H1 (cell line): ENCODE measurements at regions of chr2 and their contacts with region 1.

Region 1: DNA sequence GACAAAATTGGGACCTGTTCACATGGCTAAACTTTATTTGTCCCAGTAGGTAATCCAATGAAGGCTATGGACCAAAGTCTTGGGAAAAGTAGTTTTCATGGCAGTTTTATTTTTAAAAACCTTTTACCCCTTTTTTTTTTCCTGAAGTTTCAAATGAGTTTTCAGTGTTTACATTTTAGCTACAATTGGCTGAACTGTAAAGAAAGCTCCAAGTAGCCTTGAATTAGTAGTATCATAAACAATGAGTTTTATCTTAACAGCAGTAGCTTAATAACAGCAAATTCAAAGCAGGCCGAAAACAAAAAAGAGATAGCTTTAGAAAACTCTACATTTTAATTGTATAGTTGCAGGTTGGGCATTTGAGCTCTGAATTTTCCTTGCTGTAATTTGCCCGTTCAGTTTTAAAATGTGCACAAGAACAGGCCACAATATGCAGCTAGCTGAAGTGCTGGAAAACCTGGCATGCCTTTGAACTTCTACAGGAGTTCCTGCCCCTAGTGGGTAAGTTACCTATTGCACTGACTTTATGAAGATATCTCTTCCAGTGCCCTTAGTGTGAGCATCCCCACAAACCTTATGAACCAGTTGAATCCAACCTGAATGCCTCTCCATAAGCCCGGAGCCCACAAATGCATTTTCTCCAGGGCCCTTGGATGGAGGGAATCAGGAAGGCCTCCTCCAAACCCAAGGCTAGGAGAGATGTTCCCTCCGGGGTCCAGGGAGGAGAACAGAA is 106.7 kb downstream of the XRCC5 start:
- DNase-seq: no peak
- H3K4me3 ChIP-seq: no peak overlapping the region
- H3K27ac ChIP-seq: no peak overlapping the region
- H3K4me1 ChIP-seq: no peaks in the 10 kb centered on the region; a peak in 1 of 7 replicates
- H3K27me3 ChIP-seq: no peaks in the 10 kb centered on the region
- CTCF ChIP-seq: peak in 2 of 3 experiments; percentile 43 to 68; a peak in 2 of 4 replicates
- EP300 ChIP-seq: no peak
- POLR2A ChIP-seq: no peak
- RAD21 ChIP-seq: peak; percentile 42 to 57

Region 2: DNA sequence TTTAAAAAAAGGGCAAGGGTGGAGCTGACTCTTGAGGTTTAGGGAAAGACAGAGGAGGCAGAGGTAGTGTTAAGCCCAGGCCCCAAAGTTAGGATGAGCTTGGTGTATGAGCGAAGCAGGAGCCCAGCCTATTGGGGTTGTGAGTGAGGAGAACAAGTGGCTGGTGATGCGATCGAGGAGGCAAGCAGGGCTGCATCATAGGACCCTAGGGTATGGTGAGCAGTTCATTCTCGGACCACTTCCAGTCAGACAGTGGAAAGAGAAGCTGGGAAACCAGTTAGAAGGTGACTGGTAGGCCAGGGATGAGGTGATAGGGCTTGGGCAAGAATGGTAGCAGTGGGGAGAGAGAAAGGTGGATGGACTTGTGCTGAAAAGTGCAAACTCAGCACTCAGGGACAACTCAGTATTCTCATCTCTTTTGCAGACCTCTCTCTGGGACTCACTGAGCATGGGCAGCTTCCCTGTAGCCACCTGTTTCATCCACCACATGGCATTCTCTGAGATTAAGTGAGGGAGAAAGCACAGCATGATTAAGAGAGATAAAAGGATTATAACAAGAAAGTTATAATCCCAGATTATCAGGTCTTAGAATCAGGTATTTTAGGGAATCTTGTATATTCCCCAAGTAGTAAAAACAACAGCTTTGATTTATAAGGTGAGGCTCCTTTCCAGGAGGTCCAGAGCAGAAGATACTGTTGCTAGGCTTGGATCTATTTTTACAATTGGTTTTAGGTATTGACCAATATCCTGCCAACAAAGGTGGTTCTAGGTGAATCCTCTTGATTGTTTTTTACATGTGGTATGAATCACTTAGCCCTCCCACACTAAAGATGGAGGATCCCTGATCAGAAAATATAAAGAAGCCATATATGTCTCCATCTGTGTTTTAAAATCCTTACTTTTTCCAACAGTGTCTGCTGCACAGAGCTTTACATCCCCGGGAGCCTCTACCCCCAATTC is 68.4 kb before region 1 on chr2:
- CTCF ChIA-PET with region 1: no interaction called
- POLR2A ChIA-PET with region 1: no interaction called
- DNase-seq: no peak
- H3K4me3 ChIP-seq: no peak overlapping the region
- H3K27ac ChIP-seq: no peak overlapping the region
- H3K4me1 ChIP-seq: no peaks in the 10 kb centered on the region
- H3K27me3 ChIP-seq: no peaks in the 10 kb centered on the region
- CTCF ChIP-seq: no peak
- EP300 ChIP-seq: no peak
- POLR2A ChIP-seq: 0 out of 3 replicates have a peak, but pooled peaks of 1 of the 2 experiments have one; percentile 12
- RAD21 ChIP-seq: no peak

Region 3: GRCh38 chr2:216202626-216203250 is 13.1 kb before region 1 on chr2:
- CTCF ChIA-PET with region 1: interaction called, 11 read pairs
- POLR2A ChIA-PET with region 1: interaction called, 8 read pairs
- DNase-seq: no peak
- H3K4me3 ChIP-seq: no peak overlapping the region
- H3K27ac ChIP-seq: no peak overlapping the region
- H3K4me1 ChIP-seq: no peaks in the 10 kb centered on the region
- H3K27me3 ChIP-seq: peaks cover 0 to 2% (median 0%) of the 10 kb centered on the region in 4 experiments; a peak in 1 of 7 replicates
- CTCF ChIP-seq: no peak
- EP300 ChIP-seq: no peak
- POLR2A ChIP-seq: no peak; a peak in 1 of 3 replicates
- RAD21 ChIP-seq: no peak

Region 4: GRCh38 chr2:216296856-216297255 is 81.0 kb after region 1 on chr2:
- CTCF ChIA-PET with region 1: no interaction called
- POLR2A ChIA-PET with region 1: no interaction called
- DNase-seq: no peak
- H3K4me3 ChIP-seq: no peak overlapping the region
- H3K27ac ChIP-seq: no peak overlapping the region
- H3K4me1 ChIP-seq: peaks cover 0 to 16% (median 10%) of the 10 kb centered on the region in 4 experiments; a peak in 6 of 7 replicates
- H3K27me3 ChIP-seq: 0 out of 7 replicates have a peak, but pooled peaks cover 0 to 3% (median 0%) of the 10 kb centered on the region in 4 experiments
- CTCF ChIP-seq: no peak
- EP300 ChIP-seq: no peak
- POLR2A ChIP-seq: no peak
- RAD21 ChIP-seq: no peak